H1 (cell line): ENCODE measurements at regions of chr2 and their contacts with region 1.

Region 1: GRCh38 chr2:241391892-241392665 is 36.0 kb downstream of the FARP2 start:
- DNase-seq: peak in 1 of 2 experiments; percentile 56
- H3K4me3 ChIP-seq: no peak overlapping the region
- H3K27ac ChIP-seq: no peak overlapping the region
- H3K4me1 ChIP-seq: no peaks in the 10 kb centered on the region
- H3K27me3 ChIP-seq: no peaks in the 10 kb centered on the region
- CTCF ChIP-seq: peak; percentile 9 to 63 (median 45)
- EP300 ChIP-seq: no peak
- POLR2A ChIP-seq: no peak
- RAD21 ChIP-seq: peak; percentile 64 to 71

Region 2: GRCh38 chr2:241363316-241363879 is 28.7 kb before region 1 on chr2:
- CTCF ChIA-PET with region 1: interaction called, 15 read pairs
- POLR2A ChIA-PET with region 1: interaction called, 3 read pairs
- DNase-seq: no peak
- H3K4me3 ChIP-seq: no peak overlapping the region
- H3K27ac ChIP-seq: no peak overlapping the region
- H3K4me1 ChIP-seq: peaks cover 2 to 9% (median 8%) of the 10 kb centered on the region in 4 experiments
- H3K27me3 ChIP-seq: no peaks in the 10 kb centered on the region
- CTCF ChIP-seq: no peak
- EP300 ChIP-seq: no peak
- POLR2A ChIP-seq: no peak
- RAD21 ChIP-seq: no peak

Region 3: DNA sequence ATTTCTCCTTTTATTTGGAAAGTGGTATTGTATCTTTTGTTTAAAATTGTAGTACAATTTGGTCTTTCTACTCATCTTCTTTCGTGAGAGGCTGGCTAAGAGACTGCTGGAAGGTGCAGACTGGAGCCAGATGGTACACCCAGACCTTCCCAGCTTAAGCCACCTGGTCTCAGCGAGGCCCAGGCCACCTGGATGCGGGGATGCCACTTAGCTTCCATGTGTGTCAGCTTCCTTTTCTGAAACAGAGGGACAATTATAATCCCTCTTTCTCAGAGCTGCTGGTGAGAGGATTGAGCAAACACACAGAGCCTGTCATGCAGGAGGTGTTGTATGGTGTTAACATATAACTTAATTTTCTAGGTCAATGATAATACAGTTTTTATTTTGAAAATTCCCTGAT is 18.6 kb before region 1 on chr2:
- CTCF ChIA-PET with region 1: interaction called, 20 read pairs
- POLR2A ChIA-PET with region 1: no interaction called
- DNase-seq: no peak
- H3K4me3 ChIP-seq: no peak overlapping the region
- H3K27ac ChIP-seq: no peak overlapping the region
- H3K4me1 ChIP-seq: peaks cover 0 to 2% (median under 1%) of the 10 kb centered on the region in 4 experiments; a peak in 1 of 7 replicates
- H3K27me3 ChIP-seq: no peaks in the 10 kb centered on the region
- CTCF ChIP-seq: no peak
- EP300 ChIP-seq: no peak
- POLR2A ChIP-seq: no peak
- RAD21 ChIP-seq: no peak